Heart left ventricle (tissue), 16 donors: ENCODE measurements at regions of chr18 and their contacts with region 1.

Region 1: DNA sequence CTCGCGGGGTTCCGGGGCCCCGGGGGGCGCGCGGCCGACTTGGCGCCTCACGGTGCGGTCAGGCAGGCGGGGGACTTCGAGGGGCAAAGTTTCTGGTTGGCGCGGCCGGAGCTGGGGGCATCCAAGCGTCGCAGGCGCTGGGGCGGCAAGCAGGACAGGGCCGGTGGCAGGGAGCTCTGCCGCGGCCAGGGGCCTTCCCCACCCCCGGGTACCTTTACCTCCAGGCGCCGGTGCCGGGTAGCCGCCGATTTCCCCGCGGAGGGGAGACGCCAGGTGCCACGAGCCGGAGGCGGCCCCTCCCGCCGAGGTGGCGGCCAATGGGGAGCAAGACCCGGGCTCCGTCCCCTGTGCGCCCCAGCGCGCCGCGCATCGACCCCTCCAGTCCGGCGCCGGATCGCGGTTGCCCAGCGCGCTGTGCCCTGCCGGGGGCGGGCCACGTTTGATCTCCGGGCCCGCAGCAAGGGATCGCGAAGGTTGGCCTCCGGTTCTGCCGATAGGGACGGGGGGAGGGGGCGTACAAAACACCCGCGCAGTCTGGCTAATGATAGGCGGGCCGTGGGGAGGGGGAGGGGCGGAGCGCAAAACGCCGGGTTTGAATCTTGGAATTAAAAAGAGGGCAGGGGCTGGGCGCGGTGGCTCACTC is at the start of gene ST8SIA5:
- DNase-seq: peak in 3 of 5 donors; percentile 24 to 62 (median 45)
- ATAC-seq: peak in 3 of 4 donors; percentile 37 to 52 (median 38)
- H3K4me3 ChIP-seq: peak within 1 kb of the TSS; percentile 16 to 68 (median 53)
- H3K27ac ChIP-seq: peak within 1 kb of the TSS in 11 of 12 donors; percentile 0 to 90 (median 75)
- H3K4me1 ChIP-seq: peaks cover 0 to 48% (median 13%) of the 10 kb centered on the region in 12 donors
- H3K27me3 ChIP-seq: peaks cover 0 to 53% (median 21%) of the 10 kb centered on the region in 9 donors
- CTCF ChIP-seq: no peak
- POLR2A ChIP-seq: no peak
- total RNA-seq, gene ST8SIA5: 5.1 to 24.4 (median 8.8) TPM

Region 2: GRCh38 chr18:46677611-46678010 is 79.1 kb before region 1 on chr18:
- intact Hi-C with region 1: loop called in 1 of 10 experiments (anchors 5 kb)
- DNase-seq: no peak
- ATAC-seq: peak in 3 of 4 donors; percentile 52 to 75 (median 70)
- H3K4me3 ChIP-seq: no peak overlapping the region
- H3K27ac ChIP-seq: no peak overlapping the region
- H3K4me1 ChIP-seq: peaks cover 0 to 11% (median 0%) of the 10 kb centered on the region in 12 donors
- H3K27me3 ChIP-seq: no peaks in the 10 kb centered on the region
- CTCF ChIP-seq: peak in 11 of 12 donors; percentile 12 to 53 (median 29)
- POLR2A ChIP-seq: no peak

Region 3: DNA sequence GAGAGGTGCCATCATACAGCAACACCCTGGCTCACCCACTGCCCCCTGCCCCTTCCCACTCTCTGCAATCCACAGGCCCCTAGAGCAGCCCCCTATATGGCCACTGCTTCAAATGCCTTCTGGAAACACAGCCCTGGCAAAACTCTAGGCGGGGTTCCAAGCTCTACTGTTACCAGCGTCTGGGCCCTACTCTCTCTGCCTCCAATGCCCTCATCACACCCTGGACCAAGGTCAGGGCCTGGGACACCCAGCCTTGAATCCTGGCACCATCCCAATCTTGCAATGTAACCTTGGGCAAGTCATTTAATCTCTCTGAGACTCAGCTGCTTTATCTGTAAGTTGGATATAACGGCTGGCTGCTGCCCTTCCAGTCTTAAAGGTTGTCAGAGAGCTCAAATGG is 60.4 kb before region 1 on chr18:
- intact Hi-C with region 1: loop called in 1 of 10 experiments (anchors 10 kb)
- DNase-seq: peak in 4 of 5 donors; percentile 57 to 76 (median 68)
- ATAC-seq: peak; percentile 80 to 93 (median 88)
- H3K4me3 ChIP-seq: no peak overlapping the region
- H3K27ac ChIP-seq: peak overlapping the region in 8 of 12 donors; percentile 29 to 72 (median 43)
- H3K4me1 ChIP-seq: peaks cover 0 to 10% (median 0%) of the 10 kb centered on the region in 12 donors
- H3K27me3 ChIP-seq: no peaks in the 10 kb centered on the region
- CTCF ChIP-seq: no peak
- POLR2A ChIP-seq: no peak

Region 4: DNA sequence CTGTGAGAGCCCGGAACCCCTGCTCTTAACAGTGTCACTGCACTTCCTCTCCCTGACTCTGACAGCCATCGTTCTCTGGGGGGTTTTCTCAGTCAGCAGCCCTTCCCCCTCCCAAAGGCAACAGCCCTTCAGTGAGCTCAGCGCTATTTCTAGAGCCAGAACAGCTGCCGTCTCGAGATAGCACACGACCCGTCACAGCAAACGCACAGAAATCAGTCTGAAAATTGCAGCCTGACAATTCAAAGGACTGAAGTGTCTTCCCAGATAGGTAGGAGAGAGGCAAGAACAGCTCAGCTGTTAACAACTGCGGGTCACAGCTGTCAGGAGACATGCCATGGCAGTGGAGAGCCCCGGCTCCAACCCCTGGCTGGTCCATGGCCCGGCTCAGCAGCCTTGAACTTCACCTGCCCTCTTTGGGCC is 45.2 kb before region 1 on chr18:
- intact Hi-C with region 1: loop called in 2 of 10 experiments (anchors 5 kb)
- DNase-seq: peak in 4 of 5 donors; percentile 57 to 71 (median 66)
- ATAC-seq: peak; percentile 75 to 88 (median 83)
- H3K4me3 ChIP-seq: no peak overlapping the region
- H3K27ac ChIP-seq: peak overlapping the region in 10 of 12 donors; percentile 55 to 91 (median 76)
- H3K4me1 ChIP-seq: peaks cover 0 to 38% (median 13%) of the 10 kb centered on the region in 12 donors
- H3K27me3 ChIP-seq: no peaks in the 10 kb centered on the region
- CTCF ChIP-seq: no peak
- POLR2A ChIP-seq: no peak

Region 5: GRCh38 chr18:46821856-46822711 is 65.4 kb after region 1 on chr18:
- intact Hi-C with region 1: loop called in 1 of 10 experiments (anchors 5 kb)
- DNase-seq: no peak
- ATAC-seq: no peak
- H3K4me3 ChIP-seq: no peak overlapping the region
- H3K27ac ChIP-seq: no peak overlapping the region
- H3K4me1 ChIP-seq: no peaks in the 10 kb centered on the region
- H3K27me3 ChIP-seq: no peaks in the 10 kb centered on the region
- CTCF ChIP-seq: no peak
- POLR2A ChIP-seq: no peak